WTC11 (cell line): ENCODE measurements at regions of chr4 and their contacts with region 1.

Region 1: DNA sequence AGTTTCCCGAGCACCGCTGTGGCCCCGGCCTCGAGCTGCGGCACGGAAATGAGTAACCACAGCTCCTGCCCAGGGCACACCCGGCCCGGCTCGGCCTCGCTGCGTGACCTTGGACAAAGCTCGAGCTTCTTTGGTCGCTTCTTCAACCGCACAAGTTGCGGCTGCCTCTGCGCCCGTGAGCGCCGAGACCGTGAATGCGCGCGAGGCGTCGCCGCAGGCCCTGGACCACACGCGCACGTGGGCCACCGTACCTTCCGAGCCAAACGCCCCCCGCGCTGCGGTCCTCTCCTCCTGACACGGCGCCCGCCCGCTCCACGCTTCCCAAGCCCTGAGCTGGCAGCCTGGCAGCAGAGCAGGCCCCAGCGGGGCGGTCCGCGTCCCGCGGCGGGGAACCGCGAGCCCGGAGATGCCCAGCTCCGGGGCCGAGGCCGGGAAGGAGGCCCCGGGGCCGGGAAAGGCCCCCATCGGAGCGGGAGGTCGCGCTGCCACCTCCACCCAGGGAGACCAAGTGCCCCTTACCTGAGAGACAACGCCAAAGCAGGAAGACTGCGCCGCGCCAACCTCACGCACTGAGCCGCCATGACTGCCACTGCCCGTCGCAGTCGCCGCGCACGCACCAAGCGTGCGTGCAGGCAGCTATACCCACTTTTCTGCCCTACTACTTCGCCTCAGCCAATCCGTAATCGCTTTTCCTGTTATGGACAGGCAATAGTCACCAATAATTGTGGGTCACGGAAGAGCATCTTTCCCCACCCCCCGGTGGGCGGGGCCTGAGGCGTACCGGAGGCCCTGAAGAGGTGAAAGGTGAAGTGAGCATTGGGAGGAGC is at the start of gene GRPEL1:
- DNase-seq: peak; percentile 100
- ATAC-seq: peak; percentile 91
- H3K4me3 Mint-ChIP-seq: peak within 1 kb of the TSS; percentile 93
- H3K27ac Mint-ChIP-seq: peak within 1 kb of the TSS; percentile 84; the same call in 1 of the 2 replicates
- H3K4me1 Mint-ChIP-seq: peaks cover 29% of the 10 kb centered on the region
- H3K27me3 Mint-ChIP-seq: peaks cover 33% of the 10 kb centered on the region
- CTCF ChIP-seq: no peak
- total RNA-seq, gene GRPEL1: 45.9 to 50.1 TPM (median 50.0 TPM) in 3 replicates

Region 2: DNA sequence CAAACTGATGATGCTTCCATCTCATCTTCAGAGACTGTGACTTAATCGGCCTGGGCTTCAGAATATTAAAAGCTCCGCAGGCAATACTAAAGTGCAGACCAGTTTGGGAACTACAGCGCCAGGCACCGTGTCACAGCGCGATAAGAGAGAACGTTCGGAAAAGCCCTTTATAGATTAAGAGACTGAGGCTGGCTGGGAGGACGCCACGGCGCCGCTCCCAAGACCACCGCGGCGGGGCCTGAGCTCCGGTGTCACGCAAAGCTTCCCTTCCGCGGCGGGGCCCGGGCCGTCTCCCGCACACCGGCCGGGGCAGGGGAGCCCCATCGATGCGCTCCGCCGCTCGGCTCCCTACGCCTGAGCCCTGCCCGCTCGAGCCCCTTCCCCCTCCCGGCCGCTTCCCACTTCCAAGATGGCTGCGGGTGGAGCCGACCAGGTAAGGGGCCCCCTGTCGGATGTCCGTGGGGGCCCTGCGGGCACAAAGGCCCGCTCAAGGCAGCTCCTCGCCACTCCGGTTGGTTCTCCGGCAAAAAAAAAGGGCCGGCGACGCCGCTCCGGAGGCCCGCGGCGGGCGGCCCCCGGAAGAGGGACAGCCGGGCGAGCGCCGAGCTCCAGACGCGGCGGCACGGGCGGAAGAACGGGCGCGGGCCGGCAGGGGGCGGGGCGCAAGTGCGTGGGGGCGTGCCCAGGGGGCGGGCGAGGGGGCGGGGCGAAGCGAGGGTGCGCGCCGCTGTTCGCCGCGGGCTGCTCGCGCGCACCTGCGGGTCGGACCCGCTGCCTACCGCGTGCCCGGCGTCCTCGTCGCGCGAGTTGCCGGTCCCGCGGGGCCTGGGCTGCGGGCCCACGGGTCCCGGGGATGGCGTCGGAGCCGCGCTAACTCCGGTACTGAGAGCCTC is 158.3 kb before region 1 on chr4 and contains the start of gene TBC1D14:
- CTCF ChIA-PET with region 1: interaction called, 83 read pairs
- POLR2A ChIA-PET with region 1: interaction called, 5 read pairs
- DNase-seq: peak; percentile 85
- ATAC-seq: peak; percentile 83
- H3K4me3 Mint-ChIP-seq: peak within 1 kb of the TSS; percentile 95
- H3K27ac Mint-ChIP-seq: peak within 1 kb of the TSS; percentile 69
- H3K4me1 Mint-ChIP-seq: peaks cover 33% of the 10 kb centered on the region
- H3K27me3 Mint-ChIP-seq: peaks cover 12% of the 10 kb centered on the region
- CTCF ChIP-seq: no peak
- total RNA-seq, gene TBC1D14: 42.4 to 45.1 TPM (median 43.4 TPM) in 3 replicates

Region 3: GRCh38 chr4:6986781-6987587 is 80.7 kb before region 1 on chr4:
- CTCF ChIA-PET with region 1: interaction called, 11 read pairs
- POLR2A ChIA-PET with region 1: no interaction called
- DNase-seq: peak; percentile 94
- ATAC-seq: peak; percentile 89
- H3K4me3 Mint-ChIP-seq: peak overlapping the region; percentile 99
- H3K27ac Mint-ChIP-seq: peak overlapping the region; percentile 99
- H3K4me1 Mint-ChIP-seq: peaks cover 40% of the 10 kb centered on the region
- H3K27me3 Mint-ChIP-seq: no peaks in the 10 kb centered on the region; the same call in 1 of the 2 replicates
- CTCF ChIP-seq: no peak

Region 4: GRCh38 chr4:7081891-7082471 is 14.3 kb after region 1 on chr4:
- CTCF ChIA-PET with region 1: interaction called, 37 read pairs
- POLR2A ChIA-PET with region 1: interaction called, 6 read pairs
- DNase-seq: peak; percentile 78
- ATAC-seq: peak; percentile 97
- H3K4me3 Mint-ChIP-seq: no peak overlapping the region
- H3K27ac Mint-ChIP-seq: no peak overlapping the region
- H3K4me1 Mint-ChIP-seq: peaks cover 4% of the 10 kb centered on the region
- H3K27me3 Mint-ChIP-seq: peaks cover 73% of the 10 kb centered on the region
- CTCF ChIP-seq: 0 out of 2 replicates have a peak, but pooled peaks have one; percentile 20

Region 5: DNA sequence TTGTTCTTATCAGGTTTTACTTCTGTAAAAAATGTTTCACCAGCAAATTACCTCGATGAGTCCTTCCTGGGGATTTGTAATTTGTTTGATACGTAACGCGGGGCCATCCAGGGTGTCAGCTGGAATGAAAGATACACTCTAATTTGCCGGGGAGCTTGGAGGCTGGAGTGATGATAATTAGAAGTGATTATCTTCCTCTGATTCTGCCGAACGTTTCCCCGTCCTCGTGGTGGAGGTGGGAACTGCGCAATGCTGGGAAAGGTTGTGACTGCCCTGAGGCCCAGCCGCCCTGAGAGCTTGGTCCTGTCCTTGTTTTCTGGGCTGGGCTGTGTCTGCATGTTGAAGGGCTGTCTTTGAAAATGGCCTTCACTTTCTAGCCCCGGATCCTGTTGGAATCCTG is 172.6 kb after region 1 on chr4:
- CTCF ChIA-PET with region 1: no interaction called
- POLR2A ChIA-PET with region 1: no interaction called
- DNase-seq: no peak
- ATAC-seq: no peak
- H3K4me3 Mint-ChIP-seq: no peak overlapping the region
- H3K27ac Mint-ChIP-seq: no peak overlapping the region
- H3K4me1 Mint-ChIP-seq: no peaks in the 10 kb centered on the region
- H3K27me3 Mint-ChIP-seq: no peaks in the 10 kb centered on the region
- CTCF ChIP-seq: no peak